ENCODE measurements at regions of chr2 and their contacts with region 1.

Region 1: GRCh38 chr2:70301344-70302194 is at the start of gene FAM136A:
- DNase-seq: peak; percentile 40
- ATAC-seq: peak; percentile 93
- H3K4me3 ChIP-seq: peak within 1 kb of the TSS; percentile 84
- H3K27ac ChIP-seq: peak within 1 kb of the TSS; percentile 85
- H3K4me1 ChIP-seq: peaks cover 3% of the 10 kb centered on the region; the same call in 1 of the 2 replicates
- H3K27me3 ChIP-seq: no peaks in the 10 kb centered on the region
- CTCF ChIP-seq: peak; percentile 88 to 97 (median 95)
- EP300 ChIP-seq: no peak
- POLR2A ChIP-seq: peak; percentile 82
- RAD21 ChIP-seq: peak; percentile 70
- polyA plus RNA-seq, gene FAM136A: 128 to 134 TPM

Region 2: DNA sequence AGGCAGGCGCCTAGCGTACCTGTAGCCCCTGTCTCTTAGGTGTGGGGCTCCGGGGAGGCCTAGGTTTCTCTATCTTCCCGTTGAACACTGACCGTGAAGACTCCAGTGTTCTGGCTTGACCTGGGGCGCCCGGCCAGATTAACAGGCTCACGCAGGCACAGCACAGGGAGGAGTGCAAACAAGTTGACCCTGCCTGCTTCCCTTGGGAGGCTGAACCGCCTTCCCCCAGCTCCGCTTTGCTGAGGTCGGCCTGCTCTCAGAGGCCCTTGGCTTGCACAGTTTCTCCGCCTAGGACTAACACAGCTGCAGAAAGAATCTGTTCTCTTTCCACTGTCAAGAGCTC is 43.1 kb before region 1 on chr2:
- CTCF ChIA-PET with region 1: interaction called, 13 read pairs
- POLR2A ChIA-PET with region 1: interaction called, 4 read pairs
- RAD21 ChIA-PET with region 1: interaction called, 4 read pairs
- SMC1A ChIA-PET with region 1: interaction called, 3 read pairs
- in situ Hi-C with region 1: no loop called
- intact Hi-C with region 1: no loop called
- DNase-seq: no peak
- ATAC-seq: no peak; the same call in 1 of the 3 replicates
- H3K4me3 ChIP-seq: peak overlapping the region; percentile 82
- H3K27ac ChIP-seq: no peak overlapping the region
- H3K4me1 ChIP-seq: no peaks in the 10 kb centered on the region; the same call in 1 of the 2 replicates
- H3K27me3 ChIP-seq: no peaks in the 10 kb centered on the region
- CTCF ChIP-seq: no peak
- EP300 ChIP-seq: no peak
- POLR2A ChIP-seq: no peak
- RAD21 ChIP-seq: no peak

Region 3: GRCh38 chr2:70616168-70616694 is 314.7 kb after region 1 on chr2:
- CTCF ChIA-PET with region 1: interaction called, 128 read pairs
- POLR2A ChIA-PET with region 1: no interaction called
- RAD21 ChIA-PET with region 1: interaction called, 49 read pairs
- SMC1A ChIA-PET with region 1: interaction called, 34 read pairs
- in situ Hi-C with region 1: loop called (anchors 10 kb)
- intact Hi-C with region 1: loop called (anchors 2 kb)
- DNase-seq: no peak
- ATAC-seq: no peak
- H3K4me3 ChIP-seq: no peak overlapping the region
- H3K27ac ChIP-seq: no peak overlapping the region
- H3K4me1 ChIP-seq: no peaks in the 10 kb centered on the region
- H3K27me3 ChIP-seq: no peaks in the 10 kb centered on the region; a peak in 1 of 4 replicates
- CTCF ChIP-seq: no peak
- EP300 ChIP-seq: no peak
- POLR2A ChIP-seq: no peak
- RAD21 ChIP-seq: no peak

Region 4: GRCh38 chr2:70871398-70872211 is 570.0 kb after region 1 on chr2:
- CTCF ChIA-PET with region 1: interaction called, 11 read pairs
- POLR2A ChIA-PET with region 1: no interaction called
- RAD21 ChIA-PET with region 1: interaction called, 3 read pairs
- SMC1A ChIA-PET with region 1: interaction called, 4 read pairs
- in situ Hi-C with region 1: no loop called
- intact Hi-C with region 1: no loop called
- DNase-seq: no peak
- ATAC-seq: peak; percentile 100
- H3K4me3 ChIP-seq: no peak overlapping the region
- H3K27ac ChIP-seq: no peak overlapping the region
- H3K4me1 ChIP-seq: no peaks in the 10 kb centered on the region
- H3K27me3 ChIP-seq: peaks cover 0 to 3% of the 10 kb centered on the region in 2 experiments; a peak in 3 of 4 replicates
- CTCF ChIP-seq: peak; percentile 81 to 92 (median 87)
- EP300 ChIP-seq: no peak
- POLR2A ChIP-seq: no peak
- RAD21 ChIP-seq: peak; percentile 77

Measured in GM12878 (cell line).